ENCODE measurements at regions of chr5 and their contacts with region 1.

Region 1: GRCh38 chr5:174951146-174951780 is 226.9 kb downstream of the MSX2 start:
- DNase-seq: peak; percentile 35
- ATAC-seq: peak; percentile 88

Region 2: DNA sequence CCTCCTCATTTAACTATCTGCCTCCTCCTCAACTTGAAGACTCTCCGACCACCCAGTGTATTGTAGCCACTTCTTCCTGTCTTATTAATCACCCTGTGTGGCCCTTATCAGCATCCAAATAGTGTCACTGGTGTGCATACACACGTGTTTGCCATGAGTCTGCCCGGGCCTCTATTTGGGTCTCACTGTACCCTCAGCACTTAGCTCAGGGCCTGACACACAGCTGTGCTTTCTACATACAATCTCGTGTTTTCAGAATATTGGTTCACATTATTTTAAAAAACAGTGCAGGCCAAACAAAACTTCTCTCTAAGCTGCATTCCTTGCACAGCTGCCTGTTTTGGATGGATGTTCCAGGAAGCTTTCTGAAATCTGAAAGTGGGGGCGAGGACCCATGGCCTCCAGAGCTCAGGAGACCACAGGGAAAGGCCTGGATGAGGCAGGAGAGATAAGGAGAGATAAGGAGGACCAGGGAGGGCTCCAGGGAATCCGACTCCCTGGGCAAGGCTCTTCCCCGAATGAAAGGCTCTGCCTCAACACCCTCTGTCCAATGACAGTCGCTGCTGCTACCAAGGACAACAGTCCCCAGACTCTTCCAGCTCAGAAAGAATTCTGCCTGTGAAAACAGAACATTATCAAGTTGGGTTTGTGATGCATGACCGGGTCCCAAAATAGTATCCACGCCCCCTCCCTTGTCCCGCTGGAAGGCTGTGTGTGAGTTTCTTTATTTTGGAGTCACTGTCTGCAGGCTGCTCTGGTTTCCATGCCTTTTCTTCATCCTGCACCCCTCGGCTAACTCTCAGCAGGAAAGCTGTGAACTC is 650.1 kb before region 1 on chr5:
- intact Hi-C with region 1: no loop called
- DNase-seq: peak; percentile 38
- ATAC-seq: peak; percentile 93

Region 3: DNA sequence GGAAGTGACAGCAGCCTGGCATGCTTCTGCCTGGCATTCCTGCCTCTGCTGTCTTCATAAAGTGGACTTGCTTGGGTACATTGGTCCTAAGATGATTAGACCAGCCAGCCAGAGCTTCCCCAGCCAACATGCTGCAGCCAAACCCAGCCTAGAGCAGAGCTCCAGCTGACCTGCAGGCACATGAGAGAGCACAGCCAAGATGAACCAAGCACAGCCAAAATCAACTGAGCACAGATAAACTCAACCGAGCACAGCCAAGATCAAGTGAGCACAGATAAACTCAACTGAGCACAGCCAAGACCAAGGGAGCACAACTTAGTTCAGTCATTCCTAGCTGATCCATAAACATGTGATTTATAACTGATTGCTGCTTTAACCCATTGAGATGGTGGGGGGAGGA is 39.6 kb after region 1 on chr5:
- intact Hi-C with region 1: no loop called
- DNase-seq: peak; percentile 47
- ATAC-seq: peak; percentile 93

Region 4: DNA sequence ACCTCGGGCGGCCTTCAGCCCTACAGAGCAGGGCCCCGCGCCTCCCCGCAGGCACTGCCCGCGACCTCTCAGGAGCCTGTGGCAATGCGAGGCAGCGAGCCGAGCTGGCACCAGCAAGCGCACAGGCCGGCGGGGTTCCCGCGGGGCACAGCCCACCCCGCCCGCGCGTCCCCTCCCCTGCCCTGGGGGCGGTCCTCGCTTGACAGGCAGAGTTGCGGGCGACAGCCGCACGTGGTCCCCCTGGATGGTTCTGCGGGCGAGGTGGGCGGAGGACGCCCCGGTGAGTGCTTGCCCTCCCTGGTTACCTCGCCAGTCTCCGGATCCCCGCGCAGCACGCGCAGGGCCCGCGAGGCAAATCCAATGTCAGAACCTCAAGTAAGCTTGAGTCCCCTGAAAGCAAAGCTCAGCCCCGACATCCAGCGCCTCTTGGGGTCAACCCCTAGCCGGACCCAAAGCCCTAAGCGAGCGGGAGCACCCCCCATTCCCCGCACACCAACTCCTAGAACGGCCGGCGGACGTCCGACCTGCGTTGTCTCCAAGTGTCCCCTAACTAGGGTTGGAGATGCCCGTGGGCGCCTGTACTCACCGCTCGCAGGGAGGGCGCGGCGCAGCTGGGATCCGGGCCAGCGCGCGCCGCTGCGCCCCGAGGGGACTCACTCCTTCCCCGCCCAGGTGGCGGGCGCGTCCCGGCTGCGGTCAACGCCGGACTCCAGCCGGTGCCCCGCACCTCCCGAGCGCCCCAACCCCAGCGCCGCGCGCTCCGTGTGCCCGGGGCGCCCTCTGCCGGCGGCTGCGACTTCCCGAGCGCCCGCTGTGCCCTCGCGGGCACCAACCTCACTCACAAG is 493.0 kb after region 1 on chr5 and contains the start of gene DRD1:
- intact Hi-C with region 1: loop called (anchors 10 kb)
- DNase-seq: peak; percentile 67
- ATAC-seq: peak; percentile 81
- total RNA-seq, gene DRD1: not detected

Measured in left ventricle myocardium superior (tissue), 1 donor.